ENCODE measurements at regions of chr3 and their contacts with region 1.

Region 1: GRCh38 chr3:158727206-158728060 is 4.8 kb downstream of the RARRES1 start:
- DNase-seq: peak in 7 of 9 donors; percentile 35 to 74 (median 63)
- ATAC-seq: peak; percentile 79
- H3K4me3 ChIP-seq: peak overlapping the region; percentile 18
- H3K4me3 Mint-ChIP-seq: peak overlapping the region in 9 of 10 donors; percentile 42 to 75 (median 64)
- H3K27ac ChIP-seq: no peak overlapping the region
- H3K27ac Mint-ChIP-seq: peak overlapping the region; percentile 51 to 95 (median 90)
- H3K4me1 ChIP-seq: peaks cover 10% of the 10 kb centered on the region in 2 donors
- H3K4me1 Mint-ChIP-seq: peaks cover 10 to 62% (median 30%) of the 10 kb centered on the region in 7 donors
- H3K27me3 ChIP-seq: no peaks in the 10 kb centered on the region
- H3K27me3 Mint-ChIP-seq: peaks cover 0 to 4% (median 0%) of the 10 kb centered on the region in 5 donors

Region 2: GRCh38 chr3:157938154-157938779 is 789.2 kb before region 1 on chr3:
- CTCF ChIA-PET with region 1: no interaction called
- POLR2A ChIA-PET with region 1: no interaction called
- intact Hi-C with region 1: no loop called
- DNase-seq: no peak
- ATAC-seq: no peak
- H3K4me3 ChIP-seq: no peak overlapping the region
- H3K4me3 Mint-ChIP-seq: no peak overlapping the region
- H3K27ac ChIP-seq: no peak overlapping the region
- H3K27ac Mint-ChIP-seq: no peak overlapping the region
- H3K4me1 ChIP-seq: no peaks in the 10 kb centered on the region
- H3K4me1 Mint-ChIP-seq: no peaks in the 10 kb centered on the region
- H3K27me3 ChIP-seq: no peaks in the 10 kb centered on the region
- H3K27me3 Mint-ChIP-seq: peaks cover 0 to 8% (median under 1%) of the 10 kb centered on the region in 5 donors

Region 3: DNA sequence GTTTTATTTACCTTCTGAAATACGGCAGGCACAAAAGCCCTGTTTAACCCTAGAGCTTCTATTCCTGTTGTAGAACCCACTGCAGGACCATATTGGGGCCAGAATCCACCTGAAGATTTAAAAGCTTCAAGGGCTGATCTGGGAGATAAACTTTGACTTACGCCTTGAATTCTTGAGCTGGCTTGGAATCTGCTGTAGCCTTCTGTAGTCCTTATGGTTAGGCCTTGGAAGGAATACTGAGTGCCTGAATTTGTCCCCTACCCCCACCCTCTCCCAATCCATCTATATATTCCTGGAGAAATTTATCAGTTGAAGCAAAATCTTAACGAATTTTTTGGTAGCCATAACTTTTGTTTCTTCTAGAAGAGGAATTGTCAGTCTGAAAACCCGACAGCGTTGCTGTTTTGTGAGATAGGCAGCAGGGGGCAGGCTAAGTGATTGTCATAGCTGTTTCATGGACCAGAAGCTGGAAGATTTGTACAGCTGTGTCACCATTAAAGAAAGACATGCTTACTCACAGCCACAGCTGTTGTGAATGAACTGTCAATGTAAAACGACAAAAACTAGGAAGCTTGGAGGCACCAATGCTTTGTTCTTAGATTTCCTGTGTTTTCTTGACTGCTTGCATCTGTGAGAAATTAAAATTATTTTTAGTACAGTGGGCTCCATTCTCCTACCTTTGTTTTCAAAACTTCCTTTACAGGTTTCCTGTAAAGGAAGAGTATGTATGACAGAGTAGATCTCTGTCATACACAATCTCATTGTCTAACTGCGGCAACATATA is 67.8 kb before region 1 on chr3:
- CTCF ChIA-PET with region 1: interaction called, 4 read pairs
- POLR2A ChIA-PET with region 1: no interaction called
- intact Hi-C with region 1: loop called in 1 of 2 experiments (anchors 1 kb)
- DNase-seq: peak in 8 of 9 donors; percentile 23 to 57 (median 39)
- ATAC-seq: peak; percentile 92
- H3K4me3 ChIP-seq: no peak overlapping the region
- H3K4me3 Mint-ChIP-seq: no peak overlapping the region
- H3K27ac ChIP-seq: no peak overlapping the region
- H3K27ac Mint-ChIP-seq: peak overlapping the region in 4 of 9 donors; percentile 21 to 62 (median 30)
- H3K4me1 ChIP-seq: no peaks in the 10 kb centered on the region
- H3K4me1 Mint-ChIP-seq: peaks cover 0 to 17% (median 7%) of the 10 kb centered on the region in 7 donors
- H3K27me3 ChIP-seq: no peaks in the 10 kb centered on the region
- H3K27me3 Mint-ChIP-seq: no peaks in the 10 kb centered on the region

Region 4: GRCh38 chr3:158672293-158673176 is 54.9 kb before region 1 on chr3 and contains the start of gene LXN:
- CTCF ChIA-PET with region 1: interaction called, 3 read pairs
- POLR2A ChIA-PET with region 1: no interaction called
- intact Hi-C with region 1: loop called (anchors 1 to 2 kb)
- DNase-seq: peak; percentile 42 to 86 (median 74)
- ATAC-seq: peak; percentile 99
- H3K4me3 ChIP-seq: peak within 1 kb of the TSS; percentile 79
- H3K4me3 Mint-ChIP-seq: peak within 1 kb of the TSS; percentile 82 to 97 (median 92)
- H3K27ac ChIP-seq: peak within 1 kb of the TSS; percentile 71
- H3K27ac Mint-ChIP-seq: peak within 1 kb of the TSS; percentile 67 to 97 (median 91)
- H3K4me1 ChIP-seq: peaks cover 15 to 19% of the 10 kb centered on the region in 2 donors
- H3K4me1 Mint-ChIP-seq: peaks cover 13 to 40% (median 33%) of the 10 kb centered on the region in 7 donors
- H3K27me3 ChIP-seq: no peaks in the 10 kb centered on the region
- H3K27me3 Mint-ChIP-seq: no peaks in the 10 kb centered on the region
- total RNA-seq, gene LXN: 2.1 to 10.9 (median 6.0) TPM

Region 5: GRCh38 chr3:158739078-158739477 is 11.6 kb after region 1 on chr3:
- CTCF ChIA-PET with region 1: interaction called, 10 read pairs
- POLR2A ChIA-PET with region 1: no interaction called
- intact Hi-C with region 1: no loop called
- DNase-seq: no peak
- ATAC-seq: no peak
- H3K4me3 ChIP-seq: no peak overlapping the region
- H3K4me3 Mint-ChIP-seq: no peak overlapping the region
- H3K27ac ChIP-seq: no peak overlapping the region
- H3K27ac Mint-ChIP-seq: no peak overlapping the region
- H3K4me1 ChIP-seq: peaks cover 0 to 7% of the 10 kb centered on the region in 2 donors
- H3K4me1 Mint-ChIP-seq: peaks cover 6 to 30% (median 17%) of the 10 kb centered on the region in 7 donors
- H3K27me3 ChIP-seq: no peaks in the 10 kb centered on the region
- H3K27me3 Mint-ChIP-seq: no peaks in the 10 kb centered on the region

Region 6: GRCh38 chr3:158801696-158802408 is 74.4 kb after region 1 on chr3 and contains the start of gene MFSD1:
- CTCF ChIA-PET with region 1: interaction called, 4 read pairs
- POLR2A ChIA-PET with region 1: interaction called, 4 read pairs
- intact Hi-C with region 1: loop called in 1 of 2 experiments (anchors 2 kb)
- DNase-seq: peak; percentile 73 to 91 (median 83)
- ATAC-seq: peak; percentile 94
- H3K4me3 ChIP-seq: peak within 1 kb of the TSS; percentile 88
- H3K4me3 Mint-ChIP-seq: peak within 1 kb of the TSS; percentile 84 to 93 (median 90)
- H3K27ac ChIP-seq: peak within 1 kb of the TSS; percentile 76
- H3K27ac Mint-ChIP-seq: peak within 1 kb of the TSS; percentile 58 to 98 (median 92)
- H3K4me1 ChIP-seq: peaks cover 9 to 11% of the 10 kb centered on the region in 2 donors
- H3K4me1 Mint-ChIP-seq: peaks cover 24 to 50% (median 43%) of the 10 kb centered on the region in 7 donors
- H3K27me3 ChIP-seq: no peaks in the 10 kb centered on the region
- H3K27me3 Mint-ChIP-seq: peaks cover 0 to 24% (median 0%) of the 10 kb centered on the region in 5 donors
- total RNA-seq, gene MFSD1: 24.6 to 66.0 (median 31.1) TPM

Region 7: DNA sequence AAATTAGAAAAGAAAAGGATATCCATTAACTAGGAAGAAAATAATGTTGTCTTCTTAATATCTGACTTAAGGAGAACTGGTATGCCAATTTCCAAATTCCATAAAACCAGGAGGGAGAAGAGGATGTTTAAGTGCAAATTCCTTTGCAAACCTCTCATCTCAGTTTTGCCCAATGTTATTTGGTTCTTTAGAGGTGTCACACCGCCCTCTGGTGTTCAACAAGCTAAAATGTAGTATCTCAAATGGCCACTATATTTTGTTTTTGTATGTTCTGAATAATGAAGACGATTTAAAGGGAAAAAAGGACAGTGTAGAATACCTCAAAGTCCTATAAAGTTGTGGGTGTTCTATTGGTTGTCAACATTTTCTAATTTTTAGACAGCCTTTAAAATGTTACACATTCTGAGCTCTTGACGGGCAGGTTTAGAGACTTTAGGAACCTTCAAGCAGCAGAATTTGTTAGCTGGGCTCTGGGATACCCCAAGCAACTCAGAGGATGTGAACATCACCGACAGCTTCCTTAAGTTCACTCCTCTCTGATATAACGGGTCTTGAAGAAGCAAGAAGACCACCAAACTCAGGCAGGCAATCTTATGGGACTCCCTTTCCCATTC is 532.7 kb after region 1 on chr3:
- CTCF ChIA-PET with region 1: no interaction called
- POLR2A ChIA-PET with region 1: no interaction called
- intact Hi-C with region 1: loop called in 1 of 2 experiments (anchors 2 kb)
- DNase-seq: peak in 6 of 9 donors; percentile 2 to 39 (median 18)
- ATAC-seq: peak; percentile 40
- H3K4me3 ChIP-seq: no peak overlapping the region
- H3K4me3 Mint-ChIP-seq: no peak overlapping the region
- H3K27ac ChIP-seq: no peak overlapping the region
- H3K27ac Mint-ChIP-seq: no peak overlapping the region
- H3K4me1 ChIP-seq: no peaks in the 10 kb centered on the region
- H3K4me1 Mint-ChIP-seq: no peaks in the 10 kb centered on the region
- H3K27me3 ChIP-seq: no peaks in the 10 kb centered on the region
- H3K27me3 Mint-ChIP-seq: peaks cover 4 to 37% (median 5%) of the 10 kb centered on the region in 5 donors